HepG2 (cell line): ENCODE measurements at regions of chr12 and their contacts with region 1.

Region 1: DNA sequence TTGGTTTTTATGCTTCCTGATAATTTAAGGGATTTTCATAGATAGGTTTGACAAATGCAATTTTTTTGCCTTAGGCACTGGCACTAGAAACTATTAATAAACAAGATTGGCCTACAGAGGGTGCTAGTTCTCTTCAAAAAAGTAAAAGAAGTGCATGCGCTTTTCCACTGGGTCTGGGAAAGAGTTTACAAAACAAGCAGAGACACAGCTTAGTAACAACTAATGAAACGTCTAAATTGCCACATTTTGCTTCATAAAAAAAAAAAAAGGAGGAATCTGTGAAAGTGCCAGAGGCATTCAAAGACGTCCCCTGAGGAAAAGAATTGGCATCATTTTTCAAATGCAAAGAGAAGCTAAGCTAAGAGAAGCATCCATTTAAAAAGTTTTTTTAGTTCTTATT is 58.3 kb upstream of the EEA1 start:
- DNase-seq: peak; percentile 78
- ATAC-seq: peak; percentile 77
- H3K4me3 ChIP-seq: no peak overlapping the region; a peak in 1 of 6 replicates
- H3K27ac ChIP-seq: peak overlapping the region; percentile 57
- H3K4me1 ChIP-seq: peaks cover 45% of the 10 kb centered on the region
- H3K27me3 ChIP-seq: no peaks in the 10 kb centered on the region
- CTCF ChIP-seq: peak; percentile 73
- EP300 ChIP-seq: no peak
- POLR2A ChIP-seq: no peak
- RAD21 ChIP-seq: peak; percentile 77

Region 2: DNA sequence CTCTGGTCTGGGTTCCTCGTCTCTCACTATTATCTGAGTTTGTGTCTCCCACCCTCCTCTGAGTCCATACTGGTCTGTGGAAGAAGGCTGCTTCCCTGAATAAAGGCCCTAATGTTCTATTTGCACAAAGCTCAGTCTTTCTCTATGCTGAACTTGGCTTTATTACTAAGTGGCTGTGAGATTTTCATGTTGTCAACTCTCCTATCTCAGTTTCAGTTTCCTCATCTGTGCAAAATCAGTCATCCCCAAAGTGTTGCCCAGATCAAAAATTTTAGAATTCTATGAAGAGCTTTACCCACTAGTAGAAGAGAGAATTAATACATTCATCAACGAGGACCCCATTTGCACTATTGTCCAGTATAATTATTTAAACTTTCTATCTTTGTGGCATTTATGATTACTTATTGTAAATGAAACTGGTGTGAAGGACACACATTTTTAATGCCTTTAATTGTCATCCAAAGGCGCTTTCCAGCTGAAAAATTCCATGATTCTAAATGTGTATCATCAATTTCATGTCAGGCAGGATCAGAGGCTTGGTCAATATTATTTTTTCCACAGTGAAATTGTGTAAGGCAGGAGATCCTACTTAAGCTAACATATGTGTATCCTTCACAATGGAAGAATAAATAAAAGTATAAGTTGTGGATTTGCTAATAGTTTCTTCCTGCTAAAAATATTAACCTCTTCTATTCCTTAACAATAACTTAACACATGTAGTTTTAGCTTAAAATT is 20.8 kb after region 1 on chr12:
- CTCF ChIA-PET with region 1: no interaction called
- POLR2A ChIA-PET with region 1: interaction called, 8 read pairs
- in situ Hi-C with region 1: no loop called
- intact Hi-C with region 1: loop called (anchors 2 kb)
- DNase-seq: peak; percentile 62
- ATAC-seq: no peak
- H3K4me3 ChIP-seq: peak overlapping the region; percentile 25 to 68 (median 50); a peak in 5 of 6 replicates
- H3K27ac ChIP-seq: peak overlapping the region; percentile 89
- H3K4me1 ChIP-seq: peaks cover 79% of the 10 kb centered on the region
- H3K27me3 ChIP-seq: no peaks in the 10 kb centered on the region
- CTCF ChIP-seq: no peak
- EP300 ChIP-seq: no peak; a peak in 1 of 4 replicates
- POLR2A ChIP-seq: no peak
- RAD21 ChIP-seq: no peak

Region 3: DNA sequence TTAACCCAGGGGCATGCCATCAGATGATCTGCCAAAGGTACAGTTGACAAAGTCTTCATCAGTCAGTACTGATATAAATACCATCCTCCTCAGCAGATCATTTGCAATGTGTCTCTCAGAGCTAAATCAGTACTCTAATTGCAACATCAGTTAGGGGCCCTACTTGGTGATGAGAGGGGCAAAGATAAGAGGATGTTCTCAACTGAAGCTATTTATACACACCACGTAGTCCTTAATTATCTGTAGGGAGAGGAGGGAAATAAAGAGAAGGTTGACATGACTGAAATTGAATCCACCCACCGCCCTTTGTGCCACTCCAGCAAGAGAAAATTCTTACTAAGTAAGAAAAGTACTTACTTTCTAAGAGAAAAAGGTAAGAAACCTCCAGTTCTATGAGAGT is 232.6 kb after region 1 on chr12:
- CTCF ChIA-PET with region 1: no interaction called
- POLR2A ChIA-PET with region 1: no interaction called
- in situ Hi-C with region 1: no loop called
- intact Hi-C with region 1: loop called (anchors 5 kb)
- DNase-seq: no peak
- ATAC-seq: no peak
- H3K4me3 ChIP-seq: no peak overlapping the region
- H3K27ac ChIP-seq: no peak overlapping the region
- H3K4me1 ChIP-seq: peaks cover 18% of the 10 kb centered on the region
- H3K27me3 ChIP-seq: no peaks in the 10 kb centered on the region
- CTCF ChIP-seq: no peak
- EP300 ChIP-seq: no peak
- POLR2A ChIP-seq: no peak
- RAD21 ChIP-seq: no peak

Region 4: GRCh38 chr12:93378373-93379325 is 391.3 kb after region 1 on chr12:
- CTCF ChIA-PET with region 1: interaction called, 5 read pairs
- POLR2A ChIA-PET with region 1: no interaction called
- in situ Hi-C with region 1: no loop called
- intact Hi-C with region 1: loop called (anchors 2 kb)
- DNase-seq: no peak
- ATAC-seq: peak; percentile 8; the same call in 2 of the 3 replicates
- H3K4me3 ChIP-seq: peak overlapping the region; percentile 78 to 88 (median 80)
- H3K27ac ChIP-seq: peak overlapping the region; percentile 64
- H3K4me1 ChIP-seq: peaks cover 56% of the 10 kb centered on the region
- H3K27me3 ChIP-seq: no peaks in the 10 kb centered on the region; a peak in 1 of 5 replicates
- CTCF ChIP-seq: no peak
- EP300 ChIP-seq: no peak
- POLR2A ChIP-seq: 0 out of 4 replicates have a peak, but pooled peaks of 1 of the 2 experiments have one; percentile 29
- RAD21 ChIP-seq: no peak

Region 5: GRCh38 chr12:93419388-93420034 is 432.1 kb after region 1 on chr12:
- CTCF ChIA-PET with region 1: no interaction called
- POLR2A ChIA-PET with region 1: no interaction called
- in situ Hi-C with region 1: no loop called
- intact Hi-C with region 1: loop called (anchors 1 kb)
- DNase-seq: peak; percentile 49
- ATAC-seq: peak; percentile 70
- H3K4me3 ChIP-seq: no peak overlapping the region
- H3K27ac ChIP-seq: no peak overlapping the region
- H3K4me1 ChIP-seq: peaks cover 49% of the 10 kb centered on the region
- H3K27me3 ChIP-seq: no peaks in the 10 kb centered on the region
- CTCF ChIP-seq: peak; percentile 60
- EP300 ChIP-seq: no peak
- POLR2A ChIP-seq: no peak
- RAD21 ChIP-seq: peak; percentile 42; the same call in 1 of the 2 replicates